ENCODE measurements at regions of chr1 and their contacts with region 1.

Region 1: DNA sequence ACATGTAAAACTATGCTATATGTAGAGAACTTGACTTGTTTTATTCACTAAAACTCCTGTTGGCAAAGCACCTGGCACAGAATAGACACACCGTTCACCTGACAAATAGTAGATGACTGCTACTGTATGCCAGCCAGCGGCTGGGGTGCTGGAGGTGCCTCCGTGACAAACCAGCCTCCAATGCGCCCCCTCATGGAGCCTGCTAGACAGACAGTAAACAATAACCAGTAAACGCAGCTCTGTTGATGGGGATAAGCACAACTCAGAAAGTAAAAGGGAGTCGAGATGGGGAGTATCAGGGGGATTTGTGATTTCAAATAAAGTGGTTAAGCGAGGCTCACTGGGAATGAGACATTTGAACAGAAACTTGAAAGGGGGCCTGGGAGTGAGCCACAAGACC is 107.2 kb downstream of the PRDM2 start:
- DNase-seq: peak; percentile 77
- H3K4me3 ChIP-seq: no peak overlapping the region
- H3K27ac ChIP-seq: no peak overlapping the region
- H3K4me1 ChIP-seq: peaks cover 20% of the 10 kb centered on the region
- CTCF ChIP-seq: peak; percentile 94

Region 2: GRCh38 chr1:13748610-13749505 is 58.4 kb before region 1 on chr1:
- CTCF ChIA-PET with region 1: no interaction called
- POLR2A ChIA-PET with region 1: interaction called, 3 read pairs
- intact Hi-C with region 1: loop called (anchors 2 kb)
- DNase-seq: peak; percentile 96
- H3K4me3 ChIP-seq: peak overlapping the region; percentile 96
- H3K27ac ChIP-seq: peak overlapping the region; percentile 65
- H3K4me1 ChIP-seq: peaks cover 45% of the 10 kb centered on the region
- CTCF ChIP-seq: 0 out of 2 replicates have a peak, but pooled peaks have one; percentile 35

Region 3: GRCh38 chr1:13860031-13860430 is 52.8 kb after region 1 on chr1:
- CTCF ChIA-PET with region 1: no interaction called
- POLR2A ChIA-PET with region 1: no interaction called
- intact Hi-C with region 1: no loop called
- DNase-seq: no peak
- H3K4me3 ChIP-seq: no peak overlapping the region
- H3K27ac ChIP-seq: no peak overlapping the region
- H3K4me1 ChIP-seq: no peaks in the 10 kb centered on the region
- CTCF ChIP-seq: no peak